Naive thymus-derived CD8-positive, alpha-beta T cell (primary cell): ENCODE measurements at regions of chr10 and their contacts with region 1.

Region 1: DNA sequence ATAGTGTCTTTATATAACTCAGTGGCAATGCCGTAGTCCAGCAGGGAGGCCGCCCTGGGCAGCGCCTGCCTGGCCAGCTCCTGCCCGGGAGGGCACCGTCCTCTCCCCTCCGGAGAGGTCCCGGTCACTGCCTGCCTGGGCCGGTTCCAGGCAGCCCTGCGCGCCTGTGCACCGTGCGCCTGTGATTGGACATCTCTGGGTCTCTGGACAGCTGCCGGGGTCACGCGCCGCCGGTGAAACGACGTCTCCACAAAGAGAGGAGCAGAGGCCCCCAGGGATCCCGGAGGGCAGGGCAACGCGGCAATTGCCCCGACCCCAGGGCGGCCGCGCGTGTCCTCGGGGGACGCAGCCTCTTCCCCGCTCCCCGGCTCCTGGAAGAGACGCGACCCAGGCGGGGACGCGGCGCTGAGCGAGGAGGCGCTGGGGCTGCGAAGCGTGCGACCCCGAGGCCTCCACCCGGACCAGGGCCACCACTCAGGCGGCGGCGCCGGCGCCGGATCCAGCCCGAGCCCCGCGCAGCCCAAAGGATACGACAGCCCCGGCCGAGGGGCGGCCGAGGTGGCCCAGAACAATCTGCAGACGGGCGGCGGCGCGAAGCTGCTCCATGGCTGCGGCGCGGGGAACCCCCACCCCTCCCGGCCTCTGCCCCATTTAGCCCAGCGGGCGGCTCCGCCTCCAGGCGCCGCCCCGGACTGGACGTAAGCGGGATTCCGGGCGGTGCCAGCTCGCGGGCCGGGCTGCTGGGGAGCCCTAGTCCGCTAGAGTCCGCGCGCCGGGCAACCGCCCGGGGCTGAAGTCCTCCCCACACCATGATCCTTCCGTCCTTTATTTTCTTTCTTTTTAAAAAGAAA is at the start of gene PHYH:
- DNase-seq: peak; percentile 70 to 87 (median 77)
- ATAC-seq: peak; percentile 64 to 71
- H3K4me3 Mint-ChIP-seq: peak within 1 kb of the TSS; percentile 80 to 92 (median 88)
- H3K27ac Mint-ChIP-seq: peak within 1 kb of the TSS; percentile 86 to 100 (median 97)
- H3K4me1 Mint-ChIP-seq: peaks cover 13 to 32% (median 27%) of the 10 kb centered on the region in 4 donors
- H3K27me3 Mint-ChIP-seq: no peaks in the 10 kb centered on the region
- polyA plus RNA-seq, gene PHYH: 17.6 to 20.5 (median 20.1) TPM

Region 2: DNA sequence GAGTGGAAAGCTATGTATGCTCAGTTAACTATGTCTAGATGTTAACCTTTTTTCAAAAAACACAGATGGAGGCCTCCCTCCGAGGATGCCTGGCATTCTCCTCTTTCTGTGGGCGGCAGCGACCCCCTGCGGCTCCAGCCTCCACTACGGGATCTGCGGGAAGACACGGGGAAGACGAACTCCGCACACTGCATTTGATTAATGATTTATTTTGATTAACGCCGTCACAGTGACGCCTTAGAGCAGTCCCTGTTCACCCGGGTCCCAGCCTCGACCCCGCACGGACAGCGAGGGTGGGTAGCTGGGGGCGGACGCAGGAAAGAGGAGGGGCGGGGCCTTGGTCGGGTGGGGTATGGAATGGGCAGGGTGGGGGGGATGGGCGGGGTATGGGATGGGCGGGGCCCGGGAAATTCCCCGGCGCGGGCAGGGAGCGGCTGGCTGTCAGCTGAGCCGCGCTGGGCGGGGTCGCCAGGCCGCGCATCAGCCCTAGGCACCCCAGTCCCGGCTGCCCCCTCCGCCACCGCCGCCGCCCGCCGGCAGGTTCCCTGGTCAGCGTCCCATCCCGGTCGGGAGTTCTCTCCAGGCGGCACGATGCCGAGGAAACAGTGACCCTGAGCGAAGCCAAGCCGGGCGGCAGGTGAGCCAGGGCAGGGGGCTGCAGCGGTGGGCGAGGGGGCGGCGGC is 199.9 kb before region 1 on chr10 and contains the start of gene OPTN:
- POLR2A ChIA-PET with region 1: interaction called, 13 read pairs
- DNase-seq: peak; percentile 65 to 85 (median 78)
- ATAC-seq: peak; percentile 76 to 77
- H3K4me3 Mint-ChIP-seq: peak within 1 kb of the TSS; percentile 75 to 96 (median 96)
- H3K27ac Mint-ChIP-seq: peak within 1 kb of the TSS; percentile 93 to 98 (median 96)
- H3K4me1 Mint-ChIP-seq: peaks cover 29 to 44% (median 41%) of the 10 kb centered on the region in 4 donors
- H3K27me3 Mint-ChIP-seq: no peaks in the 10 kb centered on the region
- polyA plus RNA-seq, gene OPTN: 25.8 to 35.1 (median 27.1) TPM

Region 3: GRCh38 chr10:13160934-13161856 is 138.5 kb before region 1 on chr10 and contains the start of gene MCM10:
- POLR2A ChIA-PET with region 1: interaction called, 16 read pairs
- DNase-seq: peak; percentile 88 to 99 (median 96)
- ATAC-seq: peak; percentile 99 to 100
- H3K4me3 Mint-ChIP-seq: peak within 1 kb of the TSS; percentile 80 to 93 (median 90)
- H3K27ac Mint-ChIP-seq: peak within 1 kb of the TSS in 9 of 10 donors; percentile 36 to 94 (median 83)
- H3K4me1 Mint-ChIP-seq: peaks cover 11 to 18% (median 14%) of the 10 kb centered on the region in 4 donors
- H3K27me3 Mint-ChIP-seq: peaks cover 0 to 12% (median 3%) of the 10 kb centered on the region in 5 donors
- polyA plus RNA-seq, gene MCM10: not detected

Region 4: DNA sequence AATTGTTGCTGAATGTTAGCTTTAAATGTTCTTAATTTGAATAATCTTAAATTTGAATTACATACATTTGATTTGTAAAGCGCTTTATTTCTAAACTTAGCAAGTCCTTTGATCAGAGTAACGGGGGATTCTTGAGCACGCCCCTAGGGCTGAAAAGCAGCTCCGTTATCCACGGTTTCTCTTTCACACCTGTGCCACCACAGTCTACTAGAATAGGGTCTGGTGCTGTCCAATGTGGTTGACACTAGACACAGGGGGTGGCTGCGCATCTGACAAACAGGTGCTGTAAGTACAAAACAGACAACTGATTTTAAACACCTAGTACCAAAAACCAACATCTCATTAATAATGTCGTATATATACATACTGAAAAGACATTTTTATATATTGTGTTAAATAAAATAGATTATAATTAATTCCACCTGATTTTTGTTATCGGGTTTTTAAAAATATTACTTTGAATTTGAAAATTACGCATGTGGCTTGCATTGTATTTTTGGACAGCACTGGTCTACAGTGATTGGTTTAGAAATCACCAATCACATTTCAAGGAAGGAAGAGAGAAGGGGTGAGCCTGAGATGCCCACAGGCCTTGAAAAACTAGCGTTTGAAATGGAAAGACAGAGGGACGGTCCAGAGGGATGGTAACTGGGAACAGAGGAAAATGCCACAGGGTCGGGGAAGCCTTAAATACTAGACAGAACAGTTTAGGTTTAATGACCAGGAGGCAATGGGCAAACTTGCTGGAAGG is 41.1 kb after region 1 on chr10:
- POLR2A ChIA-PET with region 1: interaction called, 13 read pairs
- DNase-seq: peak in 4 of 10 donors; percentile 25 to 37 (median 31)
- ATAC-seq: peak; percentile 92 to 96
- H3K4me3 Mint-ChIP-seq: peak overlapping the region; percentile 20 to 63 (median 50)
- H3K27ac Mint-ChIP-seq: peak overlapping the region in 4 of 10 donors; percentile 36 to 77 (median 72)
- H3K4me1 Mint-ChIP-seq: peaks cover 16 to 58% (median 44%) of the 10 kb centered on the region in 4 donors
- H3K27me3 Mint-ChIP-seq: no peaks in the 10 kb centered on the region

Region 5: GRCh38 chr10:13348216-13349017 is 48.8 kb after region 1 on chr10 and contains the start of gene SEPHS1:
- POLR2A ChIA-PET with region 1: interaction called, 132 read pairs
- DNase-seq: peak; percentile 74 to 91 (median 80)
- ATAC-seq: peak; percentile 70 to 77
- H3K4me3 Mint-ChIP-seq: peak within 1 kb of the TSS; percentile 77 to 97 (median 95)
- H3K27ac Mint-ChIP-seq: peak within 1 kb of the TSS; percentile 92 to 99 (median 96)
- H3K4me1 Mint-ChIP-seq: peaks cover 21 to 68% (median 64%) of the 10 kb centered on the region in 4 donors
- H3K27me3 Mint-ChIP-seq: peaks cover 0 to 3% (median 0%) of the 10 kb centered on the region in 5 donors
- polyA plus RNA-seq, gene SEPHS1: 17.7 to 22.5 (median 21.9) TPM